HEK293 (cell line): ENCODE measurements at regions of chr6 and their contacts with region 1.

Region 1: GRCh38 chr6:139250296-139251044 is 41.3 kb downstream of the TXLNB start:
- H3K4me3 ChIP-seq: no peak overlapping the region
- H3K27ac ChIP-seq: no peak overlapping the region
- H3K4me1 ChIP-seq: no peaks in the 10 kb centered on the region
- CTCF ChIP-seq: peak; percentile 41; the same call in 1 of the 2 replicates

Region 2: DNA sequence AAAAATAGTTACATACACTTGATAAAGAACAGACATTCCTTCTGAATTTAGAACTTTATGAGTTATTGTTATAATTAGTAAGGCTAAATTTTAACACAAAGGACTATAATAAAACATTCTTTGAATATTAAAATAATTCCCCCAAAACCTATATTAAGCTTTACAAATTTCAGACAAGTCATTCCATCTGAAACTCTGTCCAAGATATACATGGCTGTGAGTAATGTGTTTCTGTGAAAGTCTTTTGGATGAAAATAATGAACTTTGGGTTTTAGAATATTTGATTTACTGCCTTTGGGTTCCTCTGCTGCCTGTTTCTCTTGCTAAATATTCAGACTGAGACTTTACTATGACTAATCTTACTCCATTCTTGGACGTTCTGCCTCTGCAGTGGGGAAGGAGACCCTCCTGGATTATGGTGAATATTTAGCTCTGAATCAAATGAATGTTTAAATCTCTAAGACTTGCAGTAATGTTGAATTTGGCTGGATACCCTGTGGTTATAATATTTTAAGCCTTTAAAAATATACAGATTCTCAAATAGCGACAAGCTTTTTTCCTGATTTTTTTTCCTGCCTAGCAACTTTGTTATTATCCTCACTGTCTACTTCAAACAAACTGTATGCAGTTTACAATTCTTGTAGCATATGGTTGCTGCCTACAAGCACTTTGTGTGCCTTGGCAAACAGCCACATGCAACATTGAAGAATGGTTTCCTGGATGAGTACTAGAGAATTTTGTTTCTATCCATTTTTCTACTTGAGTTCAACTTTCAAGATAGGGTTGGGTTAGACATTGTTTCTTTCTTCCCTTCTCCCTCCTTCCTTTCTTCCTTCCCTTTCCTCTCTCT is 10.1 kb before region 1 on chr6:
- CTCF ChIA-PET with region 1: interaction called, 17 read pairs
- POLR2A ChIA-PET with region 1: no interaction called
- H3K4me3 ChIP-seq: no peak overlapping the region
- H3K27ac ChIP-seq: no peak overlapping the region
- H3K4me1 ChIP-seq: peaks cover 8% of the 10 kb centered on the region; the same call in 1 of the 2 replicates
- CTCF ChIP-seq: no peak

Region 3: GRCh38 chr6:139262519-139263300 is 12.2 kb after region 1 on chr6:
- CTCF ChIA-PET with region 1: interaction called, 19 read pairs
- POLR2A ChIA-PET with region 1: no interaction called
- H3K4me3 ChIP-seq: no peak overlapping the region
- H3K27ac ChIP-seq: no peak overlapping the region
- H3K4me1 ChIP-seq: no peaks in the 10 kb centered on the region
- CTCF ChIP-seq: no peak

Region 4: DNA sequence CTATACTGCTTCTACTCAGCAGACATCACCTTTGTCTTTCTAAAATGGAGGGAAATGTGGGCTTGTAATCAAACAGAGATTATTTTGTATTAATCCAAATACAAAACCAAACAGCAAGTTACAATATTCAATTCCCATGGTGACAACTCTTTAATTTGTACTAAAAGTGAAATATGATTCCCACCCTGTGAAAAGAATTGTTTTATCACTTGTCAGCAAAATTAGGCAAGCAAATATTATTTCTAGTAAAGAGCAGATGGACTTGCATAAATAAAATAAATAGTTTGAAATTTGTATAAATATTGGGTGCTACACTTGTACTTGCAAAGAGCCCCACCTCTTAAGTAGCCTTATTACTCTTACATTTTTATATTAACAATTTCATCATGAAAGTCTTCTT is 47.5 kb after region 1 on chr6:
- CTCF ChIA-PET with region 1: no interaction called
- POLR2A ChIA-PET with region 1: no interaction called
- H3K4me3 ChIP-seq: no peak overlapping the region
- H3K27ac ChIP-seq: no peak overlapping the region
- H3K4me1 ChIP-seq: no peaks in the 10 kb centered on the region
- CTCF ChIP-seq: no peak

Region 5: GRCh38 chr6:140921366-140922226 is 1671.1 kb after region 1 on chr6:
- CTCF ChIA-PET with region 1: no interaction called
- POLR2A ChIA-PET with region 1: no interaction called
- H3K4me3 ChIP-seq: no peak overlapping the region
- H3K27ac ChIP-seq: no peak overlapping the region
- H3K4me1 ChIP-seq: no peaks in the 10 kb centered on the region
- CTCF ChIP-seq: peak; percentile 61